Lower lobe of right lung (tissue), 2 donors: ENCODE measurements at regions of chr3 and their contacts with region 1.

Region 1: DNA sequence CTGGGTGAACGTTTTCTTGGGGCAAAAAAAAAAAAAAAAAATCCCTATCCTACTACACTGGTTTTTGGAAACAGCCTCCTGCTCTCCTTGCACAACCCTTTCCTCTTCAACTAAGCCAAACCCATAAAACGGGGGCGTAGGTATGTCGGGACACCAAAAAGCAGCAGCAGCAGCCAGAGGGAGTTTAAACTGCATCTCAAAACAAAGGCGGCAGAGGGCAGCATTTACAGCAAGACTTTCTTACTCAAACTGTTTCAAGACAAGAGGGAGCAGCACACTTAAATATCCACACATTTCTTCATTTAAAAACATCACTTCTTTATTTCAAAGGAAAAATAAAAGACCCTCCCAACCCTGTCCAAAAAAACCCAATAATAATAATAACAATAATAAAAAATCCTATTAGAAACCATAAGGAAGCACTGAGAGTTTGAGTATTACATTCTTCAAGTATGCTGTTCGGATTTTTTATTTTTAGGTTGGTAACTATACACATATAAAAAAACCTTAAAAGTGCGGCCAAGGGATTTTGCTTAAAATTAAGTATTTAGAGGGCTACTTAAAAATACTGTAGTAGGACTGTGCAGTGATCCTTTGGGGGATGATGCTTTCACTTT is 43.9 kb upstream of the PLXND1 start:
- DNase-seq: peak; percentile 57
- ATAC-seq: peak; percentile 82
- H3K4me3 ChIP-seq: no peak overlapping the region
- H3K27ac ChIP-seq: no peak overlapping the region
- H3K4me1 ChIP-seq: peaks cover 29% of the 10 kb centered on the region
- H3K27me3 ChIP-seq: no peaks in the 10 kb centered on the region
- CTCF ChIP-seq: peak; percentile 68

Region 2: DNA sequence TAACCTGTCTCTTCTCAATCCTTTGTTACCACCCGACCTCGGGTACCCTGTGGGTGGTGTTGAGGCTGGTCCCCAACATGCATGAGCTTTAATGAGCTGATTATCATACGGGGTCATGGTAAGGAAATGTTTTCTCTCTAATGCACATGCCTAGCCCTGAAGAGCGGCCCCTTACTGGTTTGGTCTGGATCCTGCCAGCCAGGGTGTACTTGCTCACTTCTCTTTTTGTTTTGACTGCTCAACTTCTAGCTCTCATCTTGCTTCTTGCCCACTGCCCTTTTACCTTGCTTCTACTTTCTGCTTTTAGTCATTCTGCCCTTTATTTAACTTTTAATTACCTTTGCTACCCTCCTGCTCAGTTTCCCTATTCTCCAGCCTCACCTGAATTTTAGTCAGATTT is 815.3 kb before region 1 on chr3:
- intact Hi-C with region 1: no loop called
- DNase-seq: no peak
- ATAC-seq: no peak
- H3K4me3 ChIP-seq: no peak overlapping the region
- H3K27ac ChIP-seq: no peak overlapping the region
- H3K4me1 ChIP-seq: no peaks in the 10 kb centered on the region
- H3K27me3 ChIP-seq: no peaks in the 10 kb centered on the region
- CTCF ChIP-seq: no peak

Region 3: DNA sequence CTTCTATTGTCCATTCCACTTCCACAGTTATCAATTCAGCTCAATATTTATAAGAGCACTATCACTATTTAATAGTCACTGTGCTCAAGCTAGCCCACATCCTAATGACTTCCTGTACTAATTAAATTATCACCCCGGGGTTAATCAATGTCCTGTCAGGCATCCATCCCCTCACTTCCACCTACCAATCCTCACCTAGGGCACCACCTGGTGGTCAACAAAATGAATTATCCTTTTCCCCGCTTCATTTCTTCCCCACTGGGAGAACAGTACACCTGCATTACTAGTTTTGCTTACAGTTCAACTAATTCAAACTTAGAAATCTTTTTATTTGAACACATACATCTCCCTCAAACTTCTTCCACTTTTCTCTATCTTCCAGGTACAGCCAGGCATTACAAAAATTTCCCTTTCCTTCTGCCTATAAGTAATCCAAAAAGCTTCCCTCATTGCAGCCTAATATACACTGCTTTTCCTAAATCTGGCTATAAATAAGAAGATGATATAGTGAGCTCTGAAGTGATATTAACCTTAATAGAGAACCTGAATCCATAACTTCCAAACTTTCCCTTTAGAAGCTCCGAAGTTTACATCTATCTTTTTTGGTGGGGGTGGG is 174.7 kb after region 1 on chr3:
- intact Hi-C with region 1: loop called (anchors 10 kb)
- DNase-seq: no peak
- ATAC-seq: peak; percentile 71
- H3K4me3 ChIP-seq: no peak overlapping the region
- H3K27ac ChIP-seq: no peak overlapping the region
- H3K4me1 ChIP-seq: peaks cover 33% of the 10 kb centered on the region
- H3K27me3 ChIP-seq: no peaks in the 10 kb centered on the region
- CTCF ChIP-seq: peak; percentile 70